ENCODE measurements at regions of chr19 and their contacts with region 1.

Region 1: GRCh38 chr19:19643158-19644053 is at the start of gene GMIP:
- DNase-seq: peak; percentile 91
- ATAC-seq: peak; percentile 80
- total RNA-seq, gene GMIP: 16.2 TPM

Region 2: GRCh38 chr19:19531951-19532805 is 111.2 kb before region 1 on chr19:
- intact Hi-C with region 1: loop called (anchors 2 kb)
- DNase-seq: peak; percentile 95
- ATAC-seq: peak; percentile 88